ENCODE measurements at regions of chr6 and their contacts with region 1.

Region 1: DNA sequence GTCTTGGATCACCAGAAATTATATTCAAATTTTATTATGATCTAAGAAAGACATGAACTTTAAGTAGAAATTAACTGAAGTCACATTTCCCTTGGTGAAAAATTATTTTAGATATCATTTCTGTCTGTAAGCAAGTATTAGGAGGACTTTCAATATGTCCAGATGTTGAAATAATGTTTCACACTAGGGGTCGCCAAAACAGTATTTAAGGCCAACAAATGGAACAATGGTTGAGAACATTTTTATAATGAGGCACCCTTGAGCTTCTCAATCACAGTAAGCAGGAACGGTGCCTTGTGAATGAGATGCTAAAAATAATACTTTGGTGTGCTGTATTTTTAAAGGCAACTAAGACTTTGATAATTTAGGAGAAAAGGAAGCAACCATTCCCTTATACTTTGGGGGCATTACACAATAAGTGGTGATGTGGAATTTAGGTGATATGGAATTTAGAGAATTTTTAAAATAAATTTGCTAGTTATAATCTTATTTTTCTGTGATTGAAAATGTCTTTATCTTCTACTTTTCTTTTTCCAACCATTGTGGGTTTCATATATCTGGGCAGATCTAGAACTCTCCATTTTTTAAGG is 9.6 kb upstream of the SF3B5 start:
- DNase-seq: peak; percentile 36
- H3K4me3 ChIP-seq: no peak overlapping the region
- CTCF ChIP-seq: peak; percentile 51

Region 2: GRCh38 chr6:144115219-144115618 is 10.2 kb after region 1 on chr6:
- CTCF ChIA-PET with region 1: interaction called, 12 read pairs
- POLR2A ChIA-PET with region 1: no interaction called
- DNase-seq: no peak
- H3K4me3 ChIP-seq: no peak overlapping the region
- CTCF ChIP-seq: no peak

Region 3: DNA sequence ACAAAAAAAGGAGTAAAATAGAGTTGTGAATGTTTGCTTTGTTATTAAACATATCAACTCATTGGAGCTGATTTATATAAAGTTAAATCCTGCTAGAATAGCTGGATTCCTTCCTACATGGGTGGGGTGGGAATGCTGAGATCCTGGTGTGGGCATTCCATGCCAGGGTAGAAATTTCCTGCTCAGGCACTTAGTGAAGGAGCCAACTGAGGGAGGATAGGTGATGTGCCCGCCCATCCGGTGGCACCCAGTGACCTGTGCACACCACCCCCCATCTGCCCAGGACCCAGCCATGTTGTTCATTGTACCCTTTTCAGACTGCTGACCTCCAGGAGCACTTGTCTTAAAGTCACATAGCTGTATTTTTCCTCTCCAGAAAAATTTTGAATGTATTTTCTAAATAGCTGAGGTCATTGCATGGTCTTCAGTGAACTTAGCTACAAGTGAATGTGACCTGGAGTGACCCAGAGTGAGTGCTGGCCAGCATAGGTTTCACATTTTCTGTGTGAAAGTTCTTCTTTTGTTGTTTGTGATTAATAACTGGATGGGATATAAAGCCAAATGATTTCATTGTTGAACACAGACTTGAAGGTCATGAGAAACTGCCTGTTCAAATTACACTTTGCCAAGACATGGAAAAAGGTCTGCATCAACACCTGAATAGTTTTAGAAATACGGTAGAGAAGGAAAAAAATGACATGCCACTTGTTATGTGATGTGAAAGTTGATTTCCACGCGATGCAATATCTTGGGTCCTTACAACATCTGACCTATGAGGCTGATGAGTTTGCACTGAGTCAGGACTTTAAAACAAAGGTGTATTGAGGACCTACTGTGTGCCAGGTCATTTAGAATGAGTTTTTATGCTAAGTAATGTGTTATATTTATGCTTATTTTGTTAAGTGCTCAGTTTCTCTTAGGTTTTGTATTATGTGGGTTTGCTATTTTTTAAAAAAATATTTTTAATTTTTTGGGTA is 257.3 kb after region 1 on chr6:
- CTCF ChIA-PET with region 1: no interaction called
- POLR2A ChIA-PET with region 1: no interaction called
- DNase-seq: no peak
- H3K4me3 ChIP-seq: no peak overlapping the region
- CTCF ChIP-seq: no peak

Measured in AG04449 (cell line).